ENCODE measurements at regions of chr17 and their contacts with region 1.

Region 1: DNA sequence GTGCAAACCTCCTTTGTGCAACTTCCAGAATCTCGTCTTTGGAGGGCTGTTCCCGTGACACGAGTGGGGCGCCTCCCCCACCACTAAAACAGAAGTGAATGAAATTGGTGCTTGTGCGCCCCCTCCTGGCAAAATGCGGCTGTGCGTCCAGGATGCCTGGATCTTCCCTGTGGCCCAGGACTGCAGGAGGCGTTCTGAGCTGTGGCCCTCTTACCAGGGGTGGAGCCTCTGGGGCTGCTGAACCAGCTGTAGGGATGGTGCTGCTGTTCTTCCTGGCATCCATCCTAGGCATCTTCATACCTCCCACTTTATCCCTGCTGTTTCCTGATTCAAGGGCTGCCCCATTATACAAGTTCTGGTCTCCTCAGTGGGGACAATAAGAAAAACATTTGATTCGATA is 18.5 kb upstream of the NAGLU start:
- DNase-seq: peak; percentile 92 to 100
- ATAC-seq: peak; percentile 73 to 85
- H3K4me3 ChIP-seq: no peak overlapping the region
- H3K27ac ChIP-seq: peak overlapping the region; percentile 95 to 98
- H3K4me1 ChIP-seq: peaks cover 59% of the 10 kb centered on the region
- CTCF ChIP-seq: peak; percentile 99
- EP300 ChIP-seq: no peak
- POLR2A ChIP-seq: no peak
- RAD21 ChIP-seq: peak; percentile 96

Region 2: GRCh38 chr17:42337442-42337841 is 180.1 kb before region 1 on chr17:
- CTCF ChIA-PET with region 1: interaction called, 12 read pairs
- POLR2A ChIA-PET with region 1: no interaction called
- DNase-seq: no peak
- ATAC-seq: no peak
- H3K4me3 ChIP-seq: no peak overlapping the region
- H3K27ac ChIP-seq: no peak overlapping the region
- H3K4me1 ChIP-seq: peaks cover 15% of the 10 kb centered on the region
- CTCF ChIP-seq: no peak
- EP300 ChIP-seq: no peak
- POLR2A ChIP-seq: no peak; the same call in 1 of the 2 replicates
- RAD21 ChIP-seq: no peak

Region 3: DNA sequence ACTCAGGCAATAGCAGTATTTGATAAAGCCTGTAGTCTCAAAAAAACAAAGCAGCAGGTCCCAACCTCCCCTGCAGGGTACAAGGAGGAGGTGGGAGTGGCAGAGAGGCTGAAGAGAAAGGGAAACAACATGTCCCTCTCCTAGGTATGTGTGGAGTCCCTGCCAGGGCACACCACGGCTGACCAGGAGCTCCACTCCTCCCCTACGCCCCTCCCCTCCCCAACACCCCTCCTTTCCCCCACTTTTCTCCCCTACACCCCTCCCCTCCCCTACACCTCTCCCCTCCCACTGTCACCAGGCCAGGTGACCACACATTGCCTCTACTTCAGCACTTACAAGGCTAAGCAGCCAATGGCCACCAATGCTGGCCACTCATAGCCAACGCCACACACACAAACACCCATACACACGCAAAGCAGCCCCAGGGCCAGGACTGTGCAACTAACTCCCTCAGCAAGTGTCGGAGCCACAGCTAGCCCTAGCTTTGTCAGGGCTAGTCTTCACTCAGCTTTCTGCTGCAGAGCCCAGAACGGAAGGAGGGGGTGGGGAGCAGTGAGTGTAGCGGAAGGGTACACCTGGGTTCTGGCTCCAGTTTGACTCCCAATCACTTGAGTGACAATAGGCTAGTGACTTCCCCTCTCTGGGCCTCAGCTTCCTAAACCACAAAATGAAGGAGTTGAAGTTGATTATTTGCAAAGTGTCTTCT is 102.7 kb before region 1 on chr17:
- CTCF ChIA-PET with region 1: interaction called, 13 read pairs
- POLR2A ChIA-PET with region 1: interaction called, 3 read pairs
- DNase-seq: no peak
- ATAC-seq: no peak; a peak in 1 of 6 replicates
- H3K4me3 ChIP-seq: no peak overlapping the region
- H3K27ac ChIP-seq: peak overlapping the region in 1 of 2 experiments; percentile 40; a peak in 2 of 6 replicates
- H3K4me1 ChIP-seq: peaks cover 62% of the 10 kb centered on the region
- CTCF ChIP-seq: no peak
- EP300 ChIP-seq: no peak
- POLR2A ChIP-seq: no peak
- RAD21 ChIP-seq: no peak

Region 4: DNA sequence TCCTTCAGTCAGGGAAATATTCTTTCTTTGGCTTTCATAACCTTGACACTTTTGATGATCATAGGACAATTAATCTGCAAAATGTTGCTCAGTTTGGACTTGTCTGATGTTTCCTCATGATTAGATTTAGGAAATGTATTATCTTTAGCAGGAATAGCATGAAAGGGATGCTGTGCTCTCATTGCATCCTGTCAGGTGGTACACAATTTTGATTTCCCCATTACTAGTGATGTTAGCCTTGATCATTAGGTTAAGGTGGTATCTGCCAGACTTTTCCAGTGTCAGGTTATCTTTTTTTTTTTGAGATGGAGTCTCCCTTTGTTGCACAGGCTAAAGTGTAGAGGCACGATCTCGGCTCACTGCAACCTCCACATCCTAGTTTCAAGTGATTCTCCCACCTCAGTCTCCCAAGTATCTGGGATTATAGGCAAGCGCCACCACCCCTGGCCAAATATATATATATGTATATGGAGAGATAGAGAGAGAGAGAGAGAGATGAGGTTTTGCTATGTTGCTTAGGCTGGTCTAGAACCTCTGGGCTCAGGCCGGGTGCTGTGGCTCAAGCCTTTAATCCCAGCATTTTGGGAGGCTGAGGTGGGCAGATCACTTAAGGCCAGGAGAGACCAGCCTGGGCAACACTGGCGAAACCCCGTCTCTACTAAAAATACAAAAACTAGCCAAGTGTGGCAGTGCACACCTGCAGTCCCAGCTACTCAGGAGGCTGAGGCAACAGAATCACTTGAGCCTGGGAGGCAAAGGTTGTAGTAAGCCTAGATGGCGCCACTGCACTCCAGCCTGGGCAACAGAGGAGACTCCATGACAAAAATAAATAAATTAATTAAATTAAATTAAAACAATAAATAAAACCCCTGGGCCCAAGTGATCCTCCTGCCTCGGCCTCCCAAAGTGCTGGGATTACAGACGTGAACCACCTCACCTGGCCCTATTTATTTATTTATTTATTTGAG is 78.6 kb before region 1 on chr17:
- CTCF ChIA-PET with region 1: interaction called, 213 read pairs
- POLR2A ChIA-PET with region 1: no interaction called
- DNase-seq: no peak
- ATAC-seq: peak in 1 of 2 experiments; percentile 77; a peak in 3 of 6 replicates
- H3K4me3 ChIP-seq: no peak overlapping the region
- H3K27ac ChIP-seq: no peak overlapping the region
- H3K4me1 ChIP-seq: peaks cover 15% of the 10 kb centered on the region
- CTCF ChIP-seq: peak; percentile 45
- EP300 ChIP-seq: no peak
- POLR2A ChIP-seq: no peak
- RAD21 ChIP-seq: peak; percentile 37 to 55; a peak in 4 of 5 replicates

Region 5: GRCh38 chr17:42488032-42488431 is 29.5 kb before region 1 on chr17:
- CTCF ChIA-PET with region 1: interaction called, 11 read pairs
- POLR2A ChIA-PET with region 1: no interaction called
- DNase-seq: no peak
- ATAC-seq: no peak
- H3K4me3 ChIP-seq: no peak overlapping the region
- H3K27ac ChIP-seq: no peak overlapping the region
- H3K4me1 ChIP-seq: no peaks in the 10 kb centered on the region
- CTCF ChIP-seq: no peak
- EP300 ChIP-seq: no peak
- POLR2A ChIP-seq: no peak
- RAD21 ChIP-seq: no peak

Region 6: GRCh38 chr17:42554250-42555121 is 37.0 kb after region 1 on chr17:
- CTCF ChIA-PET with region 1: no interaction called
- POLR2A ChIA-PET with region 1: no interaction called
- DNase-seq: peak; percentile 82 to 88
- ATAC-seq: peak; percentile 81 to 89
- H3K4me3 ChIP-seq: peak overlapping the region; percentile 87
- H3K27ac ChIP-seq: peak overlapping the region; percentile 94
- H3K4me1 ChIP-seq: peaks cover 17% of the 10 kb centered on the region
- CTCF ChIP-seq: no peak
- EP300 ChIP-seq: no peak
- POLR2A ChIP-seq: peak; percentile 88
- RAD21 ChIP-seq: no peak

Region 7: DNA sequence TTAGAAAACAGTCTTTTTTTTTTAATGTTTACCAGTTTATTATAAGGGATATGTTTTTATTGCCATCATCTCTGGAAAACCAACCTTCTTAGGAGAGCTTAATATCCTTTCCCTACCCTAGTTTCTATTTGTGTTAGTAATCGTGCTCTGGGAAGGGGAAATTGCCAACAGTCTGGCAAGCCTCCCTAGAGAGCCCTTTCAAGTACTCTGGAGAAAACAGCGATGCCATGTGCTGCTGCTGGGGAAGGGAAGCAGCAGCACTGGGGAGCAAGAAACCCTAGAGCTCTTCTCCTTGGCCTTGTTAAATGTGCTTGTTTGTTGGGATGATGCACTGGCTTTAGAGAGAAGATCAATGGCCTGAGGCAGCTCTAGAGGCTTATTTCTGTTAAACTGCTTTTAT is 81.4 kb after region 1 on chr17:
- CTCF ChIA-PET with region 1: no interaction called
- POLR2A ChIA-PET with region 1: no interaction called
- DNase-seq: no peak
- ATAC-seq: no peak
- H3K4me3 ChIP-seq: no peak overlapping the region
- H3K27ac ChIP-seq: no peak overlapping the region
- H3K4me1 ChIP-seq: no peaks in the 10 kb centered on the region
- CTCF ChIP-seq: no peak
- EP300 ChIP-seq: no peak
- POLR2A ChIP-seq: no peak
- RAD21 ChIP-seq: no peak

Measured in A549 (cell line).